ENCODE measurements at regions of chr1 and their contacts with region 1.

Region 1: DNA sequence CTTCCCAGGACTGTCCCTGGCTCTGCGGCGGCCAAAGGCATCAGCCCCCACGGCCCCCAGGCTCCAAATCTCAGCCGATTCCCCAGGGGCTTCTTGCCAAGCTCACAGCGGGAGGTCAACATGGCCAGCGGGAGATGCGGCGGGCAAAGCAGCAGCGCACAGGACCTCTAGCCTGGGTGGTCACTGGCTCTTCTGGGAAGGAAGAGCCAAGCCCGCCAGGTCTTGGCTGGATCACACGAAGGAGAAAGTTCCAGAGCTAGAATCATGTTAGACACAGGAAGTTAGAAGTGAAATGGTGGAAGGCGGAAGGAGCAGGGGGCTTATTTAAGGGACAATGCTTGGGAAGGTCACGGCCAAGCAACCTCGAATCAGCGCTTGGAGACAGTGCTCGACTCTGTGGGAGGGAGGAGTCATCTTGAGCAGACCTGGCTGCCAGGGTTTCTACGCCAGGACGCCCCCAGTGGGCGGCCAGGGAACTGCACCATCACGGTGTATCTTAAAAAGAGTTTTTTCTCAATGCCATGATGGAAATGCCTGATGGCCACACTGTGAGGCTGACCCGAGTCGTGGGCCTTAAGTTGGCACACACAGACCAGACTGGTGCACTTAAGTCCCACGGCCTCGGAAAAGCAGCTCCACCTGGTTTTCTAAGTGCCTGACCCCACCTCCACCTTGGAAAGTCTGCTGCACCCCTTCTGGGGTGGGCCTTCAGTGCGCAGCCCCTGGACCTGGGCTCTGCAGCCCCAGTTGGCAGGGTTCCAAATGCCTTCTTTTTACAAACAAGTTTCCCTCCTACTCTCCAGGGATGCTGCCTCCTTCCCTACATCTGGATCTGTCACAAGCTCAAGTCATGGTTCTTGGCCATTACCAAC is 29.3 kb downstream of the SLC66A1 start:
- DNase-seq: peak; percentile 86
- H3K4me3 Mint-ChIP-seq: no peak overlapping the region
- H3K27ac Mint-ChIP-seq: no peak overlapping the region
- H3K4me1 Mint-ChIP-seq: peaks cover 10% of the 10 kb centered on the region
- H3K27me3 Mint-ChIP-seq: no peaks in the 10 kb centered on the region

Region 2: GRCh38 chr1:19251305-19252196 is 89.9 kb before region 1 on chr1 and contains the starts of genes EMC1 and MRTO4:
- CTCF ChIA-PET with region 1: interaction called, 3 read pairs
- intact Hi-C with region 1: loop called (anchors 5 kb)
- DNase-seq: peak; percentile 90
- H3K4me3 Mint-ChIP-seq: peak within 1 kb of the TSS; percentile 85
- H3K27ac Mint-ChIP-seq: peak within 1 kb of the TSS; percentile 90
- H3K4me1 Mint-ChIP-seq: peaks cover 47% of the 10 kb centered on the region
- H3K27me3 Mint-ChIP-seq: no peaks in the 10 kb centered on the region
- total RNA-seq, gene EMC1: 40.2 to 43.2 TPM
- total RNA-seq, gene MRTO4: 53.2 to 54.3 TPM

Measured in activated naive CD4-positive, alpha-beta T cell treated with anti-CD3 and anti-CD28 coated beads for 36 hours (primary cell).